Activated CD4-positive, alpha-beta memory T cell treated with anti-CD3 and anti-CD28 coated beads for 36 hours (primary cell): ENCODE measurements at regions of chr2 and their contacts with region 1.

Region 1: DNA sequence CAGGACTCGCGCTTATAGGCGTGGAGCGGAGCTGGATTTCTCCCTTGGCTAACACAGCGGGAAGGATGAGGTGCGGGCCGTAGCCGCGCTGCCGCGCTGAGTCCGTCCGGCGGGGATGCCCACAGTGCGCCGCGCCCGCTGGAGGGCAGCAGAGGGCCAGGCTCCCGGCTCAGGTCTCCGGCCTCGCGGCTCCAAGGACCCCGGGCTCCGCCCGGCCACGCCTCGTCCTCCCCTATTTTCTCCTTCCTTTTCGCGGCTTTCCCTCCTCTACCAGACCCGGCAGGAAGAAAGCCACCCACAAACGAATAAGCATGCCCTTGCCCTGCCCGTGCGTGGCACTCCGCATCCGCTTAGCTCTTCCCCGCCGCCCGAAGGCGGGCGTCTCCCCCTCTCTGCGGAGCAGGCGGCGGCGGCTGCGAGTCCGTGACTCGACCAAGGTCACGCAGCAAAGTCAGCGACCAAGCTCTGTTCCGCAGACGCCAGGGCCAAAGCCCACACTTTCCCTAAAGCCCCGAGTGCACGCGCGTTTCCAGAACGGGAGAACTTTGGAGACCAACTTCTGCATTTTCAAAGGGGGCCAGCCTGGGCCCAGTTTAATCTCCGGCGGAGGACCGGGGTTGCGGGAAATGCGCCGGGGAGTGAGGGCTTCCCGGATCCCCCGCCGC is 48.6 kb downstream of the KCNIP3 start:
- DNase-seq: peak; percentile 74
- H3K4me3 Mint-ChIP-seq: peak overlapping the region; percentile 75
- H3K27ac Mint-ChIP-seq: no peak overlapping the region
- H3K4me1 Mint-ChIP-seq: no peaks in the 10 kb centered on the region
- H3K27me3 Mint-ChIP-seq: peaks cover 43% of the 10 kb centered on the region

Region 2: DNA sequence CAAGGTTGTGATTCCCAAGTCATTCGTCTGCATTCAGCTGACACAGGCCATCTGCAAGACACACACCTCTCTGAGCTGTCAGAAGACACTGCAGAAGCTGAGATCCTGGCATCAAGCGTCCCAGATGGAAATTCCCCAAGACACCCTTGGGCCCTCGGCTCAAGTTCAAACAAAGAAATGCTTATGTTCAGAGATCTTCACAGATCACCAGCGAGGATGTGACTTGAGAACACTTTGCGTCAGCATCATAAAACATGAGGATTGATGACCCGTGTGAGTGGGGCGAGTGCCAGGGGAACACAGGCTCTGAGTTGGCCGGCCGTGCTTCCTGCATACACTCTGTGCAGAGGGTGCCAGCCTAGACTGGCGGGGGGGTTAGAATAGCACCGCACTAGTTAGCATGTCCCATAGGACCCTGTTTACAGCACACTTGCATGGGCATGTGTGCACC is 11.8 kb before region 1 on chr2:
- CTCF ChIA-PET with region 1: interaction called, 11 read pairs
- POLR2A ChIA-PET with region 1: no interaction called
- intact Hi-C with region 1: no loop called
- DNase-seq: no peak
- H3K4me3 Mint-ChIP-seq: no peak overlapping the region
- H3K27ac Mint-ChIP-seq: no peak overlapping the region
- H3K4me1 Mint-ChIP-seq: no peaks in the 10 kb centered on the region
- H3K27me3 Mint-ChIP-seq: no peaks in the 10 kb centered on the region

Region 3: GRCh38 chr2:95526360-95527341 is 181.0 kb after region 1 on chr2:
- CTCF ChIA-PET with region 1: no interaction called
- POLR2A ChIA-PET with region 1: no interaction called
- intact Hi-C with region 1: loop called (anchors 5 kb)
- DNase-seq: peak; percentile 72
- H3K4me3 Mint-ChIP-seq: peak overlapping the region; percentile 85
- H3K27ac Mint-ChIP-seq: peak overlapping the region; percentile 82
- H3K4me1 Mint-ChIP-seq: peaks cover 31% of the 10 kb centered on the region
- H3K27me3 Mint-ChIP-seq: no peaks in the 10 kb centered on the region

Region 4: DNA sequence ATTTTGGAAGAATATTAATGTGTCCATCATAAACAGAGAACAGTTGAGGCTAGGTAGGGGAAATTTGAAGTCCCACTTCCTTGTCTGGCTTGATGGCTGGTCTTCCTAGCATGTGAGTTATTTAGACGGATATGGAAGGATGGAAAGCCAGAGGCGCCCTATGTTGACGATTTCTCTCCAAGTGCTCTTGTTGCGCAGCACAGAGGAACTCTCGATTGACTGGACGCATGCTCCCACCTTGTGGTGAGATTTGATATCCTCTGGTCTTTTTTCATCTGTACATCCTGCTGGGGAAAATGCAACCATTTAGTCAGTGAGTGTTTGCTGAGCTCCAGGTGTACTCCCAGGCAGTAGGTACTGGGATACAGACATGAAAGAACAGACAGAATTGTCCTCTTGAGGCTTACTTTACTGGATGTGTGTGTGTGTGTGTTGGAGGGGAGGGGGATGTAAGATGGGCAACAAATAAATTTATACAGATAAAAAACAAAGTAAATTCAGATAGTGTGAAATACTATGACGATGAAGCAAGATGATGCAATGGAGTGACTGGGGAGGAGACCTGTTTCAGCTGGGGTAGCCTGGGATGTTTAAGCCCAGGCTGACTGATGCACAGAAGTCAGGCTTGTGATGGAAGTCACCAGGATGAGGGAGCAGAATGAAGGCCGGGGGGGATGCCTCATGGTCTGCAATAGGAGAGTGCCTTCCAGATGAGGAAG is 383.3 kb after region 1 on chr2:
- CTCF ChIA-PET with region 1: no interaction called
- POLR2A ChIA-PET with region 1: no interaction called
- intact Hi-C with region 1: loop called (anchors 2 kb)
- DNase-seq: peak; percentile 55
- H3K4me3 Mint-ChIP-seq: no peak overlapping the region
- H3K27ac Mint-ChIP-seq: no peak overlapping the region
- H3K4me1 Mint-ChIP-seq: no peaks in the 10 kb centered on the region
- H3K27me3 Mint-ChIP-seq: peaks cover 5% of the 10 kb centered on the region